Activated CD4-positive, alpha-beta T cell treated with anti-CD3 and anti-CD28 coated beads, Interleukin-2, amount 10 ng/mL, durations not matched to agents 7 days and 5 days (primary cell): ENCODE measurements at regions of chr19 and their contacts with region 1.

Region 1: GRCh38 chr19:1592755-1593500 is at the start of gene MBD3:
- DNase-seq: peak; percentile 87
- H3K4me3 Mint-ChIP-seq: peak within 1 kb of the TSS; percentile 86
- H3K27ac Mint-ChIP-seq: peak within 1 kb of the TSS; percentile 93
- H3K4me1 Mint-ChIP-seq: peaks cover 21% of the 10 kb centered on the region
- H3K27me3 Mint-ChIP-seq: no peaks in the 10 kb centered on the region
- total RNA-seq, gene MBD3: 76.2 to 93.3 TPM

Region 2: GRCh38 chr19:1605236-1606137 is 12.6 kb after region 1 on chr19 and contains the start of gene UQCR11:
- CTCF ChIA-PET with region 1: interaction called, 13 read pairs
- POLR2A ChIA-PET with region 1: interaction called, 3 read pairs
- DNase-seq: peak; percentile 94
- H3K4me3 Mint-ChIP-seq: peak within 1 kb of the TSS; percentile 99
- H3K27ac Mint-ChIP-seq: peak within 1 kb of the TSS; percentile 99
- H3K4me1 Mint-ChIP-seq: peaks cover 56% of the 10 kb centered on the region
- H3K27me3 Mint-ChIP-seq: no peaks in the 10 kb centered on the region
- total RNA-seq, gene UQCR11: 144 to 184 TPM